ENCODE measurements at regions of chr15 and their contacts with region 1.

Region 1: GRCh38 chr15:88610701-88611231 is 10.4 kb upstream of the AEN start:
- DNase-seq: no peak
- ATAC-seq: no peak
- H3K4me3 ChIP-seq: no peak overlapping the region
- H3K27ac ChIP-seq: no peak overlapping the region
- H3K4me1 ChIP-seq: peaks cover 7% of the 10 kb centered on the region; the same call in 1 of the 2 replicates
- H3K27me3 ChIP-seq: peaks cover 41% of the 10 kb centered on the region
- CTCF ChIP-seq: no peak

Region 2: GRCh38 chr15:88476635-88477060 is 134.1 kb before region 1 on chr15:
- CTCF ChIA-PET with region 1: interaction called, 4 read pairs
- POLR2A ChIA-PET with region 1: no interaction called
- in situ Hi-C with region 1: no loop called
- intact Hi-C with region 1: loop called (anchors 1 kb)
- DNase-seq: no peak
- ATAC-seq: peak; percentile 50; the same call in 1 of the 2 replicates
- H3K4me3 ChIP-seq: no peak overlapping the region
- H3K27ac ChIP-seq: no peak overlapping the region
- H3K4me1 ChIP-seq: no peaks in the 10 kb centered on the region
- H3K27me3 ChIP-seq: no peaks in the 10 kb centered on the region
- CTCF ChIP-seq: peak; percentile 79

Region 3: DNA sequence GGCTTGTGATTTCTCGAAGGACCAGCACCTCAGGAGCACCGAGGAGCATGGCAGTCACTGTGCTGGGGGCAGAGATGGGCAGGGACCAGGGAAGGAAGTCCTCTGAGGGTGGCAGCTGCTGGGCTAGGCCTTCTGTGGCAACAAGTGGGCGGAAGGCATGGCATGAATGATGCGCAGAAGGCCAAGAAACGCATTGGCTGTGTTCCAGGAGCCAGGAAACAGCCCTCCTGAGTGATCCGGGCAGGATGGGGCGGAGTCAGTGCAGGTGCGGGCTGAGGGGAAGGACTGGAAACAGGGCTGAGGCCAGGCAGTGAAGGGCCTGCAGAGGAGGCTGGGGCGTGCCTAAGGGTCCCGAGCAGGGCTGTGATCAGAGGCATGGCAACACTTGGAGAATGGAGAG is 119.6 kb before region 1 on chr15:
- CTCF ChIA-PET with region 1: no interaction called
- POLR2A ChIA-PET with region 1: no interaction called
- in situ Hi-C with region 1: no loop called
- intact Hi-C with region 1: loop called (anchors 5 kb)
- DNase-seq: no peak
- ATAC-seq: no peak
- H3K4me3 ChIP-seq: no peak overlapping the region
- H3K27ac ChIP-seq: no peak overlapping the region
- H3K4me1 ChIP-seq: no peaks in the 10 kb centered on the region
- H3K27me3 ChIP-seq: no peaks in the 10 kb centered on the region
- CTCF ChIP-seq: no peak